Activated CD4-positive, alpha-beta T cell treated with anti-CD3 and anti-CD28 coated beads, Interleukin-2, amount 10 ng/mL, durations not matched to agents 24 days and 14 days (primary cell): ENCODE measurements at regions of chr2 and their contacts with region 1.

Region 1: DNA sequence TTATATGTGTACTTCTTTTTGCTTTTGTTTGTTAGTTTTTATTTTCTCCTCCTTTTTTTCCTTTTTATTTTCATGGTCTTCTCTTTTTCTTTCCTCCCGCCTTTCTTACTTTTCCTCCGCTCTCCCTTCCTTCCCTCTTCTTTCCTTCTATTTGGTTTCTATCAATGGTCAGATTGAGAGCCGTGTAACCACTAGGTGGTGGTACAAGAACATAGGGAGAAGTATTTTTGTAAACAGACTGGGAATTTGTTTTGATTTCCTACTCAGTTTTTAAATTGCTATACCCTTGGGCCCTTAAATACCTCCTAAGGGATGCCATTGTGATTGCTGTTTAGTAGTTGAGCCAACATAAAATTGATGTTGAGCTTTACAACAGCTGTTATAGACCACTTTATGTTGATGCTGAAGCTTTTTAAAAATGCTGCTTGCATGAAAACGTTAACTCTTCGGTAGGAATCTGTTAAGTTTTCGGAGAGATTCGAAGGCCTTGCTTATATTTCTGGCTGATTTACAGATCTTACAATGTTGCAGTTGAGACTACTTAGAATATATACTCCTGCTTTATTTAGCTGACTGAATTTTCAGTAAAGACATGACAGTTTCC is 124.2 kb downstream of the UBE2E3 start:
- DNase-seq: peak; percentile 79
- H3K4me3 Mint-ChIP-seq: peak overlapping the region; percentile 13
- H3K27ac Mint-ChIP-seq: peak overlapping the region; percentile 30
- H3K4me1 Mint-ChIP-seq: peaks cover 43% of the 10 kb centered on the region
- H3K27me3 Mint-ChIP-seq: no peaks in the 10 kb centered on the region

Region 2: GRCh38 chr2:181025004-181025403 is 79.6 kb before region 1 on chr2:
- intact Hi-C with region 1: no loop called
- DNase-seq: no peak
- H3K4me3 Mint-ChIP-seq: no peak overlapping the region
- H3K27ac Mint-ChIP-seq: no peak overlapping the region
- H3K4me1 Mint-ChIP-seq: peaks cover 2% of the 10 kb centered on the region
- H3K27me3 Mint-ChIP-seq: no peaks in the 10 kb centered on the region

Region 3: GRCh38 chr2:181140414-181140813 is 35.8 kb after region 1 on chr2:
- intact Hi-C with region 1: loop called (anchors 1 kb)
- DNase-seq: no peak
- H3K4me3 Mint-ChIP-seq: peak overlapping the region; percentile 79
- H3K27ac Mint-ChIP-seq: peak overlapping the region; percentile 80
- H3K4me1 Mint-ChIP-seq: peaks cover 56% of the 10 kb centered on the region
- H3K27me3 Mint-ChIP-seq: no peaks in the 10 kb centered on the region

Region 4: GRCh38 chr2:181178823-181179412 is 74.3 kb after region 1 on chr2:
- intact Hi-C with region 1: loop called (anchors 5 kb)
- DNase-seq: peak; percentile 75
- H3K4me3 Mint-ChIP-seq: peak overlapping the region; percentile 30
- H3K27ac Mint-ChIP-seq: peak overlapping the region; percentile 86
- H3K4me1 Mint-ChIP-seq: peaks cover 40% of the 10 kb centered on the region
- H3K27me3 Mint-ChIP-seq: no peaks in the 10 kb centered on the region

Region 5: DNA sequence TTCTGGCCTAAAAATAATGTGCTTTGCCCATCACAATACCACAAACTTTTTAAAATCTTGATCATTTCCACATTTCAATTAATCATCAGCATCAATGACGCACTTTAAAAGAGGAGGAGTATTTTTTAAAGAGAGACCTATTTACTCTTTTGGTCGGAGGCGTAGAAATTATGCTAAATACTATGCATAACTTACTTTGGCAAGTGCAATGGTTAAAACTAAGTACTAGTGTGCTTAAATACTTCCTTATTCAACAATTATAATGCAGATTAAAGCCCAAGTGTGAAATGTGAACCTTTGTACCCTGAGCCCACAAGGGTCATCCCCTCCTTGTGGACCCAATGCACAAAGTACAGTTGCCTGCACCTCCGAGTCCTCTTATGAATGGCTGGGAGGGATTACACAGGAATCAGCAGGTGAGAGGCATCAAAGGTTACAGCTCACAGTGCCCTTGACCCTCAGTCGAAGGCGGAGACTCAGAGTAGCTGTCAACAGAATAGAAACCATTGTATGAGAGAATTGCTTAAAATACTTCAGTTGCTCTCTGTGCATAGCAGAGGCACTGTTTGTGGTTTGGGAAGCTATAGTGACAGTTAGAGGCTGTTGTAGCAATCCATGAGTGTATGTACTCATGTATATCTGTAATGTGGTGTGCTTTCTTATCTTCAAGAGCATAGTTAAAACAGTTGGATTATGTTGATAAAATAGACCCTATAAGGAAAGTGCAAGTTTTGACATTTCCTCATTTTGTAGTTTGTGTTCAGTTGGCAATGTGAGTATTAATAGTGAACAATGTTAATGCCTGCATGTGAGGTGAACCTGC is 200.9 kb after region 1 on chr2:
- intact Hi-C with region 1: loop called (anchors 1 kb)
- DNase-seq: peak; percentile 91
- H3K4me3 Mint-ChIP-seq: peak overlapping the region; percentile 66
- H3K27ac Mint-ChIP-seq: peak overlapping the region; percentile 89
- H3K4me1 Mint-ChIP-seq: peaks cover 65% of the 10 kb centered on the region
- H3K27me3 Mint-ChIP-seq: no peaks in the 10 kb centered on the region

Region 6: GRCh38 chr2:181466661-181467576 is 362.3 kb after region 1 on chr2:
- intact Hi-C with region 1: loop called (anchors 1 kb)
- DNase-seq: peak; percentile 92
- H3K4me3 Mint-ChIP-seq: peak overlapping the region; percentile 32
- H3K27ac Mint-ChIP-seq: peak overlapping the region; percentile 71
- H3K4me1 Mint-ChIP-seq: peaks cover 72% of the 10 kb centered on the region
- H3K27me3 Mint-ChIP-seq: no peaks in the 10 kb centered on the region

Region 7: DNA sequence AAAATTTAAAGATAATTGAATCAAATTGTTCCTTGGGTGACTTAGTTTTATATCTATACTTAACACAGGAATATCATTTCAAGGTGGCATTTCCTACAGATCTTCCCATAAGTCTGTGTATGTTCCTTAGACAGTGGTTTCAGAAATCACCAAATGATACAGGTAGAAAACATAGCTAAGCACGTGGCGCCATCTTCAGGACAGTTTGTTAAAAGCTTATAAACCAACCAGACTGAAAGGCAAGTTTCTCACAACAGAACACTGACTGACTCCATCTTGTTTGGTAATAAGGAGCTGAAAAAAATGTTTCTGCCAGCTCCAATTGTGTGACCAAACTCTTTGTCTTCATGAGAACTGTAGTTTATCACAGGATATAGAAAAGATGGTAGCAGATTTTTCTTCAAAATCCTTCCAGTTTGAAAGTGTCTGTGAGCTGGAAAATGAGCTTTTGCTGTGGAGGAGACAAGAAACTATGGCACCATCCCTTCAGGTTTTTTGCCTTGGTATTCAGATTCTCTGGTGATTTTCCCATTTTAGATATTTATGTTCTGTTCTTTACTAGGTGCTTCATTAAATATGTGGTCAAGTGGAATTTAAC is 610.5 kb after region 1 on chr2:
- intact Hi-C with region 1: loop called (anchors 1 kb)
- DNase-seq: peak; percentile 92
- H3K4me3 Mint-ChIP-seq: no peak overlapping the region
- H3K27ac Mint-ChIP-seq: no peak overlapping the region
- H3K4me1 Mint-ChIP-seq: no peaks in the 10 kb centered on the region
- H3K27me3 Mint-ChIP-seq: peaks cover 23% of the 10 kb centered on the region